Ascending aorta (tissue), 2 donors: ENCODE measurements at regions of chr12 and their contacts with region 1.

Region 1: GRCh38 chr12:93785262-93786010 is 108.3 kb downstream of the CRADD start:
- DNase-seq: peak; percentile 29 to 85
- H3K4me3 ChIP-seq: peak overlapping the region in 1 of 2 donors; percentile 24
- H3K27ac ChIP-seq: peak overlapping the region; percentile 78 to 86
- H3K4me1 ChIP-seq: peaks cover 14 to 35% of the 10 kb centered on the region in 2 donors
- H3K27me3 ChIP-seq: no peaks in the 10 kb centered on the region
- CTCF ChIP-seq: no peak

Region 2: DNA sequence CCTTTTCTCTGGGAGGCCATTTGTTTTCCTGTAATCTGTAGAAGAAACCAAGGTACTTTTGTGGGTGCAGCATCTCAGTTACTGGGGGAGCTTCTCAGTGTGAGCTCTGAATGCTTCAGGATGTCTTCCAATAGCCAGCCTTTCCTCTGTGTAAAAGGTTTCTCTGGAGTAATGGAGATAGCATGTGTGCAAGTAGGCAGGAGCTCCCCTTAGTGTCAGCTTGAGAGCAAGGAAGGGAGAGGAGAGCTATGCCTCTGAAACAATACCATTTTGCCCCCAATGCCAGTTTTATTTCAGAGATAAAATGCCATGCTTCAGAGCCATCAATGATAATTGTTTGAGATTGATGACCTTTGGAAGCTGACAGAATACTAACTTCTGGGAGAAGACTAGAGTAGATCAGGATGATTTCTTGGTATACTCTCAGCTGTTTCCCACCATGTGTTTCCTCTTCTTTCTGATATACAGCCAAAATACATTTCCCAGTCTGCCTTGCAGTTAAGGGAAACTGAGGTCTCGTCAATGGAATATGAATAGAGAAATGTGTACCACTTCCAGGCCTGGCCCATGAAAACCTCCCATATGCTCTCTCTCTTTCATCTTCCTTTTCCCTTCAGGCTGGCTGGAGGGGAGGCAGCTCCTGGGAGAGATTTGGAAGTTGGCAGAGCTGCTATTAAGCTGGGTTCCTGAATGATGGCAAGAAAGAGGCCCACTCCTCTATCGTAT is 17.4 kb after region 1 on chr12:
- intact Hi-C with region 1: loop called (anchors 2 kb)
- DNase-seq: no peak
- H3K4me3 ChIP-seq: peak overlapping the region in 1 of 2 donors; percentile 30
- H3K27ac ChIP-seq: peak overlapping the region; percentile 58 to 69
- H3K4me1 ChIP-seq: peaks cover 0 to 15% of the 10 kb centered on the region in 2 donors
- H3K27me3 ChIP-seq: no peaks in the 10 kb centered on the region
- CTCF ChIP-seq: peak in 1 of 3 experiments; percentile 25

Region 3: DNA sequence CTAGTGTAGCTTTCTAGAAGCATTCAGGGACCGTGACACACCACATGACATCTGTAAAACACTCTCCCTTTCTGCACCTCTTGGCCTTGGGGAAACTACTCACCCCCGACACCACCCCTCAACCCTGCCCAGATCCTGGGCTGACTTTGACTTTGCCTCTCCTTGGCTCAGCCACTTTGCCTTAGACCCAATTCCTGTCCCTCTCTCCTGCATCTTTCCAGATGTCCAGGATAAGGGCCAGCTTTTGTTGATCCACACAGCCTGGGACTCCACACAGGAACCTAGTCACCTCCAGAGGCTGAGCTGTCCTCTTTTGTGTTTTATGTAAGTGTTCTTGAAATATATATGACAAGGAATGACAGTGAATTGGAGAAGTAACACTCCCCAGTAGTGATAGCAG is 209.3 kb after region 1 on chr12:
- intact Hi-C with region 1: no loop called
- DNase-seq: no peak
- H3K4me3 ChIP-seq: no peak overlapping the region
- H3K27ac ChIP-seq: no peak overlapping the region
- H3K4me1 ChIP-seq: peaks cover 0 to 3% of the 10 kb centered on the region in 2 donors
- H3K27me3 ChIP-seq: no peaks in the 10 kb centered on the region
- CTCF ChIP-seq: no peak